Naive thymus-derived CD4-positive, alpha-beta T cell (primary cell): ENCODE measurements at regions of chr9 and their contacts with region 1.

Region 1: DNA sequence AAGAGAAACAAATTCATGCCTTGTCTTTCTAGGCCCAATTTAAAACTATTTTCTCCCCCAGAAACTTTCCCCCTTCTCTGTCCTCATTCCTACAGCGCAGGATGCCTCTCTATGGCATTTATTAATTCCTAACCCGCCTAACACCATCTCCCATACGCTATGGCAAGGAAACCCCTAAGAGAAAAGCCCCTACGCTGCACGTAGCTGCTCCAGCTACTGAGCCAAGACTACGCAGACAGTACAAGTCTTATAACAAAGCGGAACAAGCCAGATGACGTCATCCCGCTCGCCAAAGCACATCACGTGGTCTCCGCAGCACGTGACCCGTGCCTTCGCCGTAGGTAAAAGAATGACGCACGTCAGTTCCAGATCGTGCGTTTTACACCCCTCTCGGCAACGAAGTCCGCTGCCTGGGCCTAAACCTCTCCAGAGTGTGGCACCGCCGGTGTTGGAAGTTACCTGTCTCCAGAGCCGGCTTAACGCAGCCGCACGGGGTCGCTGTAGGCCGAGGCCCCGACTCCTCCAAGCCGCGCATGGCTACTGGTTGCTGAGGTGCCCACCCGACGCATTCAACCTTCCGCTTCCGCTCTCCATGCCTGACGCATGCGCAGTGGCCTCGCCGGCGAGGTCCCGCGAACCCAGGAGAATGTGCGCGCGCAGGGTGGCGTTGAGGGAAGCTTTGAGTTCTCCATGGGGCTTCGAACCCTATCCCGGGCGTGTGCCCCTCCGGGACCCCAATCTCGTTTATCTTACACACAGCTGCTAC is at the start of gene TRMO:
- DNase-seq: peak; percentile 98 to 99 (median 98)
- ATAC-seq: peak; percentile 85
- H3K4me3 ChIP-seq: peak within 1 kb of the TSS; percentile 88
- H3K4me3 Mint-ChIP-seq: peak within 1 kb of the TSS; percentile 83 to 97 (median 94)
- H3K27ac ChIP-seq: peak within 1 kb of the TSS; percentile 98
- H3K27ac Mint-ChIP-seq: peak within 1 kb of the TSS; percentile 97 to 100 (median 99)
- H3K4me1 ChIP-seq: peaks cover 36 to 38% of the 10 kb centered on the region in 2 donors
- H3K4me1 Mint-ChIP-seq: peaks cover 26 to 66% (median 47%) of the 10 kb centered on the region in 7 donors
- H3K27me3 ChIP-seq: no peaks in the 10 kb centered on the region
- H3K27me3 Mint-ChIP-seq: peaks cover 0 to 5% (median 0%) of the 10 kb centered on the region in 5 donors
- total RNA-seq, gene TRMO: 26.8 to 55.3 (median 43.8) TPM

Region 2: DNA sequence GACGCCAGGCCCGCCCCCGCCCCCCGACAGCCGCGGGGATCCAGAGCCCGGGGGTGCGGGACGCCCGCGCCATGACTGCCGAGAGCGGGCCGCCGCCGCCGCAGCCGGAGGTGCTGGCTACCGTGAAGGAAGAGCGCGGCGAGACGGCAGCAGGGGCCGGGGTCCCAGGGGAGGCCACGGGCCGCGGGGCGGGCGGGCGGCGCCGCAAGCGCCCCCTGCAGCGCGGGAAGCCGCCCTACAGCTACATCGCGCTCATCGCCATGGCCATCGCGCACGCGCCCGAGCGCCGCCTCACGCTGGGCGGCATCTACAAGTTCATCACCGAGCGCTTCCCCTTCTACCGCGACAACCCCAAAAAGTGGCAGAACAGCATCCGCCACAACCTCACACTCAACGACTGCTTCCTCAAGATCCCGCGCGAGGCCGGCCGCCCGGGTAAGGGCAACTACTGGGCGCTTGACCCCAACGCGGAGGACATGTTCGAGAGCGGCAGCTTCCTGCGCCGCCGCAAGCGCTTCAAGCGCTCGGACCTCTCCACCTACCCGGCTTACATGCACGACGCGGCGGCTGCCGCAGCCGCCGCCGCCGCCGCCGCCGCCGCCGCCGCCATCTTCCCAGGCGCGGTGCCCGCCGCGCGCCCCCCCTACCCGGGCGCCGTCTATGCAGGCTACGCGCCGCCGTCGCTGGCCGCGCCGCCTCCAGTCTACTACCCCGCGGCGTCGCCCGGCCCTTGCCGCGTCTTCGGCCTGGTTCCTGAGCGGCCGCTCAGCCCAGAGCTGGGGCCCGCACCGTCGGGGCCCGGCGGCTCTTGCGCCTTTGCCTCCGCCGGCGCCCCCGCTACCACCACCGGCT is 68.1 kb before region 1 on chr9:
- CTCF ChIA-PET with region 1: no interaction called
- POLR2A ChIA-PET with region 1: interaction called, 3 read pairs
- intact Hi-C with region 1: loop called in 1 of 2 experiments (anchors 2 kb)
- DNase-seq: peak; percentile 47 to 72 (median 59)
- ATAC-seq: peak; percentile 87
- H3K4me3 ChIP-seq: peak overlapping the region; percentile 51
- H3K4me3 Mint-ChIP-seq: peak overlapping the region; percentile 85 to 93 (median 90)
- H3K27ac ChIP-seq: no peak overlapping the region
- H3K27ac Mint-ChIP-seq: peak overlapping the region in 6 of 9 donors; percentile 1 to 91 (median 73)
- H3K4me1 ChIP-seq: peaks cover 5 to 18% of the 10 kb centered on the region in 2 donors
- H3K4me1 Mint-ChIP-seq: peaks cover 9 to 39% (median 21%) of the 10 kb centered on the region in 7 donors
- H3K27me3 ChIP-seq: peaks cover 12 to 54% of the 10 kb centered on the region in 2 donors
- H3K27me3 Mint-ChIP-seq: peaks cover 62 to 86% (median 71%) of the 10 kb centered on the region in 5 donors

Region 3: GRCh38 chr9:97943308-97943855 is 21.2 kb after region 1 on chr9:
- CTCF ChIA-PET with region 1: interaction called, 10 read pairs
- POLR2A ChIA-PET with region 1: interaction called, 54 read pairs
- intact Hi-C with region 1: loop called in 1 of 2 experiments (anchors 1 kb)
- DNase-seq: no peak
- ATAC-seq: no peak
- H3K4me3 ChIP-seq: no peak overlapping the region
- H3K4me3 Mint-ChIP-seq: no peak overlapping the region
- H3K27ac ChIP-seq: no peak overlapping the region
- H3K27ac Mint-ChIP-seq: no peak overlapping the region
- H3K4me1 ChIP-seq: peaks cover 4 to 9% of the 10 kb centered on the region in 2 donors
- H3K4me1 Mint-ChIP-seq: peaks cover 5 to 17% (median 10%) of the 10 kb centered on the region in 7 donors
- H3K27me3 ChIP-seq: no peaks in the 10 kb centered on the region
- H3K27me3 Mint-ChIP-seq: peaks cover 0 to 40% (median 0%) of the 10 kb centered on the region in 5 donors

Region 4: DNA sequence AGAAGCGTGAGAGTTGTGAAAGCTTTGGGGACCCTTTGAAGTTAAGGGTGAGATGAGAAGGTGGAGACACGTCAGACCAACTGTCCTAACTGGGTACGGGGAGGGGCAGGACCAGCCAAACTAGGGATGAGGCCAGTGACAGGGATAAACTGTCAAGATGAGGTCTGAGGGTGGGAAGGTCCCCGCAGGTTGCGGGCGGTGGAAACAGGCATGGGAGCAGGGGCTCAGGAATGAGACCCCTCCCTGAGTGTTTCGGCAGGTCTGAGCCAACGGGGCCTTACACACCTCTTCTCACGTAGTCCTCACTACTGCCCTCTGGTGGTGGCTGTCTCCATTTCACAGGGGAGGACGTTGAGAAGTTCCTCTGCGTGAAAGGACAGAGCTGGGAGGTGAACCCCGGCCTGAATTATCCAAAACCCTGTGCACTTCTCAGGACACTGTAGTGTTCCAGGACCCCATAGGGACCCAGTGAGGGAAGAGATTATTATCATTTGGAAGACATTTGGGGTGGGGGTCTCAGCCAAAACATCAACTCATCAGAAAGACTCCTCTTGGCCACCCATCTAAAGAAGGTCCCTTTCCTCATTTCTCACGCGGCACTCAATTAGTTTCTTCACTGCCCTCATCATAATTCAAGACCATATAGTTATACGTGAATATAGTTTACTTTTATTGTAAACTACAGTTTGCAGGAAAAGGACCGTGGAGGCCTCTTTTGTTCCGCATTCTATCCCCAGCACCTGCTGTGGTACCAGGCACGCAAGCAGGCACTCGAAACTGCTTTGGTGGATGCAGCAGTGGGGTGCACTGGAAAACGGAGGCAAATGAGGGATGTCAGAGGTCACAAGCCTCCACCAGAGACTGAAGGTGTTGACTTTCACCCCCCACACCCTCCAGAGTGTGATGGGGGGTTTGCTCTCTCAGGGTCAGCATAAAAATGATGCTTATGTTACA is 112.7 kb after region 1 on chr9:
- CTCF ChIA-PET with region 1: interaction called, 54 read pairs
- POLR2A ChIA-PET with region 1: interaction called, 36 read pairs
- intact Hi-C with region 1: loop called (anchors 1 kb)
- DNase-seq: peak; percentile 76 to 92 (median 86)
- ATAC-seq: peak; percentile 99
- H3K4me3 ChIP-seq: no peak overlapping the region
- H3K4me3 Mint-ChIP-seq: peak overlapping the region in 8 of 10 donors; percentile 11 to 63 (median 41)
- H3K27ac ChIP-seq: no peak overlapping the region
- H3K27ac Mint-ChIP-seq: peak overlapping the region in 8 of 9 donors; percentile 9 to 87 (median 66)
- H3K4me1 ChIP-seq: peaks cover 0 to 4% of the 10 kb centered on the region in 2 donors
- H3K4me1 Mint-ChIP-seq: peaks cover 5 to 12% (median 8%) of the 10 kb centered on the region in 7 donors
- H3K27me3 ChIP-seq: no peaks in the 10 kb centered on the region
- H3K27me3 Mint-ChIP-seq: peaks cover 0 to 8% (median 0%) of the 10 kb centered on the region in 5 donors

Region 5: GRCh38 chr9:98118640-98119601 is 196.8 kb after region 1 on chr9 and contains the start of gene TRIM14:
- CTCF ChIA-PET with region 1: interaction called, 3 read pairs
- POLR2A ChIA-PET with region 1: interaction called, 30 read pairs
- intact Hi-C with region 1: loop called in 1 of 2 experiments (anchors 2 kb)
- DNase-seq: peak; percentile 23 to 79 (median 39)
- ATAC-seq: peak; percentile 64
- H3K4me3 ChIP-seq: peak within 1 kb of the TSS; percentile 78
- H3K4me3 Mint-ChIP-seq: peak within 1 kb of the TSS; percentile 81 to 100 (median 93)
- H3K27ac ChIP-seq: peak within 1 kb of the TSS; percentile 93
- H3K27ac Mint-ChIP-seq: peak within 1 kb of the TSS; percentile 95 to 100 (median 96)
- H3K4me1 ChIP-seq: peaks cover 26 to 39% of the 10 kb centered on the region in 2 donors
- H3K4me1 Mint-ChIP-seq: peaks cover 35 to 70% (median 58%) of the 10 kb centered on the region in 7 donors
- H3K27me3 ChIP-seq: no peaks in the 10 kb centered on the region
- H3K27me3 Mint-ChIP-seq: no peaks in the 10 kb centered on the region
- total RNA-seq, gene TRIM14: 54.1 to 114 (median 79.7) TPM

Region 6: DNA sequence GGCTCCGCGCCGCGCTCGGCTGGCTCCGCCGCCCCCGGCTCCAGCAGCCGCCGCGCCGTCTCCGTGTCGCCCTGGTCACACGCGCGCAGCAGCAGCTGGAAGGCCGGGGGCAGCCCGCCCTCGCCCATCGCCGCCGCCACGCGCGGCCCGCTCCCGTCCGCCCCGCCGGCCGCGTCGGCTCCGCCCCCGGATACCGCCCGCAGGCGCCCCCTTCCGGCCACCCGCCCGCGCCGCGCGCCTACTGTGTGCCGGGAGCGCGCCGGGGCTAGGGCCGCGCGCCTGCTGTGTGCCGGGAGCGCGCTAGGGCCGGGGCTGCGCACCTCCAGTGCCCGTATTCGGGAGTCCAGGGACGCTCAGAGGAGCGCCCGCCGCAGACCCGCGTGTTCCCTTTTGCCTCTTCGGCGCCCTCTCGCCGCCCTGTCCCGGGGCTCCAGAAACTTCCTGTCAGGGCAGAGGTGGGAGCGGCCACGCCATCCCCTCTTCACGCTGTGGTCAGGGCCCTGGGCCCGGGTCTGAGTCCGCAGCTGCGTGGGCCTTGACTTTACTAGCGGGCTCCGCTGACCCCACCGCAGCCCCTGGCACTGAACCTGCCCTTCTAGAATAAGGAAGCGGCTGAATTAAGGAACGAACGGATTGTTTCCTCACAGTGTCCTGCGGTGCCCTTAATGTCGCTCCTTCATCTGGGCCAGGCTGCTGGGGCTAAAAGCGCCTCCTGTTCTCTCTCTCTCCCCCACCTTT is 874.4 kb after region 1 on chr9 and contains the start of gene ANKS6:
- CTCF ChIA-PET with region 1: no interaction called
- POLR2A ChIA-PET with region 1: no interaction called
- intact Hi-C with region 1: loop called in 1 of 2 experiments (anchors 10 kb)
- DNase-seq: peak; percentile 67 to 95 (median 84)
- ATAC-seq: peak; percentile 98
- H3K4me3 ChIP-seq: peak within 1 kb of the TSS; percentile 87
- H3K4me3 Mint-ChIP-seq: peak within 1 kb of the TSS; percentile 87 to 94 (median 90)
- H3K27ac ChIP-seq: peak within 1 kb of the TSS; percentile 74
- H3K27ac Mint-ChIP-seq: peak within 1 kb of the TSS; percentile 63 to 90 (median 87)
- H3K4me1 ChIP-seq: peaks cover 6 to 12% of the 10 kb centered on the region in 2 donors
- H3K4me1 Mint-ChIP-seq: peaks cover 21 to 37% (median 32%) of the 10 kb centered on the region in 7 donors
- H3K27me3 ChIP-seq: no peaks in the 10 kb centered on the region
- H3K27me3 Mint-ChIP-seq: peaks cover 0 to 23% (median 0%) of the 10 kb centered on the region in 5 donors
- total RNA-seq, gene ANKS6: 8.1 to 18.4 (median 13.5) TPM